ENCODE measurements at regions of chr17 and their contacts with region 1.

Region 1: DNA sequence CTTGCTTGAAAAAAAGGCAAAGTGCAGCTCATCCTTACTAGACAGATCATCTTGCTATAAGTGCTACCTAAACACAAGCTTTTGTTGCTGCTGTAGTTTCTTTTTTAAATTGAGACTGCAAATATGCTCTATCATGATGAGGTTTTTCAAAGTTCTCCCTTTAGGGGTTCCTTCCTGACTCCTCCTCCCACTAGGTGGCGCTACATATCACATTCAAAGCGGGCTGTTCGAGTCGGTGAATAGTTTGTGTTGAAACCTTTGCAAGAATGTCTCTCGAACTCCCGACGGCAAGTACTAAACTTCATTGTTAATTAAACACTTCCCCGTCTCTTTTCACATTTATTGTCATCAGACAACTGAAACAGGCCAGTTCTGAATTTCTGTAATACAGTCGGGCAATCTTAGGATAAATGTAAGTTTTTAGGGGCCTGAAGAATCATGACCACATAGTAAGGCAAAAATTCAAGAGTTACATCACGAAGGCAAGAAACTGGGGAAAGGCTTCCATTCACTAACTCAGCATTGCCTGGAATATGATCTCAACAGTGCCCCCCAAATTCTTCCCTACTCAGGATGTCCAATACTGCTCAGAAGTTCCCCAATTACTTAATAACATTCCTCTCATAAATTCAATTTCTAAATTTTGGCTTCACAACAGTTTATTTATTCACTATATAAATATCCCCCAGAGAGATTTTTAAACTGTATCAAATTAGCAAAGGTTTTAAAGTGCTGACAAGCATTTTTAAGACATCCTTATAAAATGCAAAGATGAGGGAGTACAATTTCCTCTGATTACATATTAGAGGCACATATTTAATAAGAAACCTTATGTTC is 6.7 kb downstream of the HS3ST3A1 start:
- DNase-seq: peak; percentile 52
- ATAC-seq: peak; percentile 74 to 77
- H3K4me3 ChIP-seq: no peak overlapping the region
- H3K27ac ChIP-seq: no peak overlapping the region
- H3K4me1 ChIP-seq: no peaks in the 10 kb centered on the region
- H3K27me3 ChIP-seq: peaks cover 24% of the 10 kb centered on the region
- CTCF ChIP-seq: peak; percentile 87

Region 2: DNA sequence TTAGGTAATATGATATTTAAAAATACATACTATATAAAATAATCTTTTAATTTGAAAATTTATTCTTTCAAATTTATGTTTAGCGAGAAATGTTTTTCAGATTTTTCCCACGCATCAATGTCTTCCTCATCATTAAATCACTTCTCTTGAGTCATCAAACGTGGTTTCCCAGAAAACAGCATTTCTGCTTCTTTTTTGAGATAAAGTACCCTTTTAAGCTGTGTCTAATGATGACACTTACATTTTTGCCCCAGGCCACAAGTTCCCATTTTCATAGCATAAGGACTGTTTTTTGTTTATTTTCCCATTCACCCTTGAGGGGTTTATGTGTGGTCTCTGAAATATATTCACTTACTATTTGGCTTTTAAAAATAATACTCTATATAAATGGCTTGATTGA is 145.7 kb after region 1 on chr17:
- intact Hi-C with region 1: no loop called
- DNase-seq: no peak
- ATAC-seq: no peak
- H3K4me3 ChIP-seq: no peak overlapping the region
- H3K27ac ChIP-seq: no peak overlapping the region
- H3K4me1 ChIP-seq: no peaks in the 10 kb centered on the region
- H3K27me3 ChIP-seq: no peaks in the 10 kb centered on the region
- CTCF ChIP-seq: no peak

Region 3: GRCh38 chr17:14300575-14301278 is 705.7 kb after region 1 on chr17 and contains the start of gene HS3ST3B1:
- intact Hi-C with region 1: loop called (anchors 10 kb)
- DNase-seq: peak; percentile 98
- ATAC-seq: peak; percentile 92 to 95
- H3K4me3 ChIP-seq: peak within 1 kb of the TSS; percentile 66
- H3K27ac ChIP-seq: peak within 1 kb of the TSS; percentile 82
- H3K4me1 ChIP-seq: peaks cover 44% of the 10 kb centered on the region
- H3K27me3 ChIP-seq: peaks cover 87% of the 10 kb centered on the region
- CTCF ChIP-seq: no peak
- total RNA-seq, gene HS3ST3B1: 3.4 TPM

Measured in lower lobe of right lung (tissue), 2 donors.